Calu3 (cell line): ENCODE measurements at regions of chr2 and their contacts with region 1.

Region 1: GRCh38 chr2:152635635-152636298 is 81.5 kb downstream of the PRPF40A start:
- DNase-seq: peak; percentile 76
- H3K4me3 Mint-ChIP-seq: no peak overlapping the region
- H3K27ac Mint-ChIP-seq: no peak overlapping the region
- H3K4me1 Mint-ChIP-seq: no peaks in the 10 kb centered on the region
- H3K27me3 Mint-ChIP-seq: no peaks in the 10 kb centered on the region
- CTCF ChIP-seq: peak; percentile 84

Region 2: GRCh38 chr2:151782378-151783132 is 853.2 kb before region 1 on chr2:
- CTCF ChIA-PET with region 1: no interaction called
- intact Hi-C with region 1: no loop called
- DNase-seq: no peak
- H3K4me3 Mint-ChIP-seq: no peak overlapping the region
- H3K27ac Mint-ChIP-seq: no peak overlapping the region
- H3K4me1 Mint-ChIP-seq: no peaks in the 10 kb centered on the region
- H3K27me3 Mint-ChIP-seq: no peaks in the 10 kb centered on the region
- CTCF ChIP-seq: no peak

Region 3: GRCh38 chr2:152036611-152037469 is 598.9 kb before region 1 on chr2:
- CTCF ChIA-PET with region 1: interaction called, 3 read pairs
- intact Hi-C with region 1: loop called (anchors 1 kb)
- DNase-seq: peak; percentile 65
- H3K4me3 Mint-ChIP-seq: no peak overlapping the region
- H3K27ac Mint-ChIP-seq: no peak overlapping the region
- H3K4me1 Mint-ChIP-seq: no peaks in the 10 kb centered on the region
- H3K27me3 Mint-ChIP-seq: peaks cover 26% of the 10 kb centered on the region
- CTCF ChIP-seq: peak; percentile 68

Region 4: DNA sequence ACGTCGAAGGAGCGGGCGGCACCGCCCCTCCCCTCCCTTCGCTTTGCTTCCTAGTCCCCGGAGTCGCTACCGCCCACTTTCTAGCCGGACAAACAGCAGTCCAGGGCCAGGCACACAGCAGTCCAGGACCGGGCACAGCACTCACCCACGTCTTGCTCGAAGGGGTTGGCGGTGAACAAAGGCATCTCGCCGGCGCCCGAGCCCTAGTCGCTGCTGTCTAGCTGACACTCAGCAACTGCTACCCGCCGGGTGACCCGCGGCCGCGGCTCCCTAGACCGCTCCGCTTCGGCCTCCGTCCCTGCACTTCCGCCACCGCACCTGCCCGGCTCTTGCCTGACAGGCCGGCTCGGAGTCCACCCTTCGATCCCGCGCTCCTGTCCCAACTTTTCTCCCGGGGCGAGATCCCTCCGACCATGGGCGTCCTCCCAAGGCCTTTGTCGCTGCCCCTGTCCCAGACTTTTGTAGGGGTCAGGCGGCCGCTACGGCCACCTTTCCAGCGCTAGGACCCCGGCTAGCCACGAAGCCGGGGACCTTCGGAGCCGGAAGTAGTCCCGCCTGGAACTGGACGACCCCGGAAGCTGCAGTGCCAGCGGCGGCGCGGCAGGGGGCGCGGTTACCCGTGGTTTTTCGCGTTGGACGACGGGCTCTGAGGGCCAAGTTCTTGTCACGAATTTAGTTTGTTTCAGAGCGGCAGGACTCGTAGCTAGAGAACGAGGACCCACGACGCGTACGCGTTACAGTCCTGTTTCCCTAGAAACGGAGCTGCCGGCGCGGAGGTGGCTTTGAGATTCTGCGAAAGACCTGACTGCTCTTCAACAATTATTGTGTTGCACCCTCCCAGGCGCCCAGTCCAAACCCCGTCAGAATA is 460.1 kb before region 1 on chr2 and contains the start of gene STAM2:
- CTCF ChIA-PET with region 1: interaction called, 20 read pairs
- intact Hi-C with region 1: loop called (anchors 1 kb)
- DNase-seq: peak; percentile 96
- H3K4me3 Mint-ChIP-seq: peak within 1 kb of the TSS; percentile 81
- H3K27ac Mint-ChIP-seq: peak within 1 kb of the TSS; percentile 96
- H3K4me1 Mint-ChIP-seq: peaks cover 19% of the 10 kb centered on the region
- H3K27me3 Mint-ChIP-seq: no peaks in the 10 kb centered on the region
- CTCF ChIP-seq: peak; percentile 93
- total RNA-seq, gene STAM2: 28.7 and 28.8 TPM in 2 replicates

Region 5: GRCh38 chr2:152189622-152190495 is 445.9 kb before region 1 on chr2:
- CTCF ChIA-PET with region 1: interaction called, 5 read pairs
- intact Hi-C with region 1: loop called (anchors 1 kb)
- DNase-seq: peak; percentile 55
- H3K4me3 Mint-ChIP-seq: no peak overlapping the region
- H3K27ac Mint-ChIP-seq: no peak overlapping the region
- H3K4me1 Mint-ChIP-seq: peaks cover 9% of the 10 kb centered on the region
- H3K27me3 Mint-ChIP-seq: no peaks in the 10 kb centered on the region
- CTCF ChIP-seq: peak; percentile 41

Region 6: DNA sequence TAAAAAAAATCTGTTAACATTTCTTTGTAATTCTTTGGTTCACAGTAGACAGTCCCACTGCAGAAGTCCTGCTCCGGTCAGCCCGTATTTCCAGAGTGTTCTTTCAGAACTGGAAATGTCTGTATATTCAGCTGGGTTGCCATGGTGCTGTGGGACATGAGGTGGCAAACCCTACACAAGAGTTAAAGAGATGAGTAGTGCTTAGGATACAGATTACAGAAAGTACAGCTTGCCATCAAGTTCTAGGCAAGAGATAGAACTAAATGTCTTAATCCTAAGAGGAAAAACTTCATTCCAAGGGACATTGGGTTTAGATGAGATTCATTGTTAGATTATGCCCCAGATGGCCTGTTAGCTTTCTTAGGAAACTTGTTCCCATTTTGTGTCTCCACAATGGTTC is 240.7 kb before region 1 on chr2:
- CTCF ChIA-PET with region 1: no interaction called
- intact Hi-C with region 1: no loop called
- DNase-seq: no peak
- H3K4me3 Mint-ChIP-seq: no peak overlapping the region
- H3K27ac Mint-ChIP-seq: no peak overlapping the region
- H3K4me1 Mint-ChIP-seq: peaks cover 33% of the 10 kb centered on the region
- H3K27me3 Mint-ChIP-seq: no peaks in the 10 kb centered on the region
- CTCF ChIP-seq: no peak